HepG2 (cell line): ENCODE measurements at regions of chr3 and their contacts with region 1.

Region 1: GRCh38 chr3:170811928-170812591 is 57.9 kb downstream of the RPL22L1 start:
- DNase-seq: peak; percentile 78
- ATAC-seq: peak; percentile 85
- H3K4me3 ChIP-seq: no peak overlapping the region
- H3K27ac ChIP-seq: no peak overlapping the region
- H3K4me1 ChIP-seq: peaks cover 6% of the 10 kb centered on the region; the same call in 1 of the 2 replicates
- H3K27me3 ChIP-seq: peaks cover 0 to 26% of the 10 kb centered on the region in 2 experiments; a peak in 1 of 5 replicates
- CTCF ChIP-seq: peak; percentile 88
- EP300 ChIP-seq: no peak
- POLR2A ChIP-seq: no peak
- RAD21 ChIP-seq: peak; percentile 59; the same call in 1 of the 2 replicates

Region 2: DNA sequence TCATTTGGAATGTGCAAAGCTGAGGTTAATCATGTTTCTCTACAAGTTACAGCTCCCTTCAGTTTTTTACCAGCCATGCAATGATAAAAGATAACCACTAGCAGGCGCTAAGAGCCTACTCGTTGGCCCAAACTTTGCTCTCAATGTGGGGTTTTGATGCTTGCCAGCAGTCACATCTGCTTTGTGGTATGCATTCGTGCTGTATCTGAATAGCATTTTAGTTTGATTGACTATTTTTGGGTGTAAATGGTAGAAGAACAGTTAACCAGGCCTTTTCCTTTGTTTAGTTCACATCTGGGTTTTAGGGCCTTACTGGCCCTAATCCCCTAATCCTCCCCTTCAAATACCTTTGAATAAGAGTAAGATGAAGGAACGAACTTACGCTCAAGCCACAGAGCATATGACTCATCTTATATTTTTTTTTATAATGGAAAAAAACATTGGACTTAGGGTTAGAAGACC is 397.8 kb before region 1 on chr3:
- CTCF ChIA-PET with region 1: interaction called, 14 read pairs
- POLR2A ChIA-PET with region 1: no interaction called
- in situ Hi-C with region 1: no loop called
- intact Hi-C with region 1: loop called (anchors 1 kb)
- DNase-seq: peak; percentile 52
- ATAC-seq: peak; percentile 34
- H3K4me3 ChIP-seq: no peak overlapping the region
- H3K27ac ChIP-seq: no peak overlapping the region
- H3K4me1 ChIP-seq: peaks cover 22% of the 10 kb centered on the region
- H3K27me3 ChIP-seq: no peaks in the 10 kb centered on the region; a peak in 1 of 5 replicates
- CTCF ChIP-seq: peak; percentile 91
- EP300 ChIP-seq: no peak
- POLR2A ChIP-seq: no peak
- RAD21 ChIP-seq: peak; percentile 91

Region 3: GRCh38 chr3:170419557-170420087 is 392.4 kb before region 1 on chr3:
- CTCF ChIA-PET with region 1: interaction called, 14 read pairs
- POLR2A ChIA-PET with region 1: no interaction called
- in situ Hi-C with region 1: loop called (anchors 10 kb)
- intact Hi-C with region 1: loop called (anchors 1 kb)
- DNase-seq: no peak
- ATAC-seq: no peak
- H3K4me3 ChIP-seq: no peak overlapping the region
- H3K27ac ChIP-seq: no peak overlapping the region
- H3K4me1 ChIP-seq: peaks cover 58% of the 10 kb centered on the region
- H3K27me3 ChIP-seq: no peaks in the 10 kb centered on the region; a peak in 1 of 5 replicates
- CTCF ChIP-seq: no peak
- EP300 ChIP-seq: no peak
- POLR2A ChIP-seq: no peak
- RAD21 ChIP-seq: no peak

Region 4: DNA sequence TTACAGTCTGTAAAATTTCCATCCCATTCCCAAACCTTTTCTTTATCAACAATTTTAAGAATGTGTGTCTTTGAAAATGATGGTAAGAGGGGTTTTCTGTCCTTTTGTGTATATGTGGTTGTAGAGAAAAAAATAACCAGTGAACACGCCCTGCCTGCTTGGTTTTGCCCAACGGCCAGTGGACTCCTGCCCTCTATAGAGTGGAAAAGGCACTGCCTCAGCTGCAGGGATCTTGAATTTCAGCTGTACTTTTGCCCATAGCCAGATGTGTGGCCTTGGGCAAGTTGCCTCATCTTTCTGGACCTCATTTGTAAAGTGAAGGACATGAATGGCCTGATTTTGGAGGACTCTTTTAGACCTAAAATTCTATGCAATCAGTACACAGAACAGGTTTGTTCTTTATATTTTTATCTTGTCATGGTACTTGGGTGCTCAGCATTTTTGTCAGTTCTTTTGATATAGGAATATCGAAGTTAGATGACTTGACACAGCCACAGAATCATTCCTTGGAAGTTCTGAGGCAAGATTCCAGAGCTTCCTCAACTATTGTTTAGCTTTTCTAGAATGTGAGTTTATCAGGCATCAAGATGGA is 312.4 kb before region 1 on chr3:
- CTCF ChIA-PET with region 1: no interaction called
- POLR2A ChIA-PET with region 1: no interaction called
- in situ Hi-C with region 1: no loop called
- intact Hi-C with region 1: loop called (anchors 10 kb)
- DNase-seq: peak; percentile 79
- ATAC-seq: peak; percentile 99
- H3K4me3 ChIP-seq: no peak overlapping the region
- H3K27ac ChIP-seq: no peak overlapping the region
- H3K4me1 ChIP-seq: peaks cover 29% of the 10 kb centered on the region
- H3K27me3 ChIP-seq: no peaks in the 10 kb centered on the region
- CTCF ChIP-seq: peak; percentile 93
- EP300 ChIP-seq: no peak
- POLR2A ChIP-seq: no peak
- RAD21 ChIP-seq: peak; percentile 79

Region 5: GRCh38 chr3:170689893-170690660 is 122.0 kb before region 1 on chr3:
- CTCF ChIA-PET with region 1: no interaction called
- POLR2A ChIA-PET with region 1: no interaction called
- in situ Hi-C with region 1: no loop called
- intact Hi-C with region 1: loop called (anchors 5 kb)
- DNase-seq: peak; percentile 18
- ATAC-seq: peak; percentile 95
- H3K4me3 ChIP-seq: no peak overlapping the region
- H3K27ac ChIP-seq: no peak overlapping the region
- H3K4me1 ChIP-seq: no peaks in the 10 kb centered on the region
- H3K27me3 ChIP-seq: peaks cover 0 to 6% of the 10 kb centered on the region in 2 experiments; a peak in 1 of 5 replicates
- CTCF ChIP-seq: peak; percentile 78
- EP300 ChIP-seq: no peak
- POLR2A ChIP-seq: no peak
- RAD21 ChIP-seq: peak; percentile 68